Activated B cell treated with CpG ODN at 0.5 μM for 24 hours (primary cell): ENCODE measurements at regions of chr16 and their contacts with region 1.

Region 1: DNA sequence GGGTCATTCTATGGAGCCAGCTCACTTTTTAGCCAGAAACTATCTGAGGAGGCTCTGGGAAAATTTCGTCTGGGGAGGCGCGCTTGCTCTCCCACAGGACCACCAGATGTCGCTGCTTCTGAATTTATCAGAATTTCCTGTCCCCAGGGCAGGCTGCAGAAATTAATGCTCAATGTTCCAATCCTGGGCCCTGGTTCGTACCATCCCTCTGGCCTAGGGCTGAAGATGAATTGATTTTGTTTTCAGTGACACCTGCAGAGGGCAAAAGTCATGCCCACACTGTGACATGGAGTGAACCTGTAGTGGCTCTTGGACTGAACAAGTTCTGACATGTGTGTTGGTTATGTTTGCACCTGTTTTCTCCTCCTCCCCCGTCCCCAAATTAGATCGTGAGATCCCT is 482.6 kb downstream of the NPIPA7 start:
- DNase-seq: peak; percentile 18
- ATAC-seq: no peak
- H3K4me3 Mint-ChIP-seq: no peak overlapping the region
- H3K27ac Mint-ChIP-seq: no peak overlapping the region
- H3K4me1 Mint-ChIP-seq: peaks cover 2% of the 10 kb centered on the region
- H3K27me3 Mint-ChIP-seq: peaks cover 8% of the 10 kb centered on the region
- CTCF ChIP-seq: no peak

Region 2: GRCh38 chr16:16183562-16183961 is 678.0 kb before region 1 on chr16:
- CTCF ChIA-PET with region 1: no interaction called
- POLR2A ChIA-PET with region 1: no interaction called
- intact Hi-C with region 1: no loop called
- DNase-seq: no peak
- ATAC-seq: no peak
- H3K4me3 Mint-ChIP-seq: no peak overlapping the region
- H3K27ac Mint-ChIP-seq: no peak overlapping the region
- H3K4me1 Mint-ChIP-seq: no peaks in the 10 kb centered on the region
- H3K27me3 Mint-ChIP-seq: peaks cover 6% of the 10 kb centered on the region
- CTCF ChIP-seq: no peak

Region 3: GRCh38 chr16:17070882-17071592 is 209.5 kb after region 1 on chr16:
- CTCF ChIA-PET with region 1: no interaction called
- POLR2A ChIA-PET with region 1: no interaction called
- intact Hi-C with region 1: loop called (anchors 2 kb)
- DNase-seq: peak; percentile 67
- ATAC-seq: peak; percentile 82
- H3K4me3 Mint-ChIP-seq: peak overlapping the region; percentile 88
- H3K27ac Mint-ChIP-seq: peak overlapping the region; percentile 98
- H3K4me1 Mint-ChIP-seq: peaks cover 59% of the 10 kb centered on the region
- H3K27me3 Mint-ChIP-seq: no peaks in the 10 kb centered on the region
- CTCF ChIP-seq: no peak

Region 4: GRCh38 chr16:17138801-17139200 is 277.3 kb after region 1 on chr16:
- CTCF ChIA-PET with region 1: no interaction called
- POLR2A ChIA-PET with region 1: no interaction called
- intact Hi-C with region 1: loop called (anchors 1 kb)
- DNase-seq: no peak
- ATAC-seq: no peak
- H3K4me3 Mint-ChIP-seq: no peak overlapping the region
- H3K27ac Mint-ChIP-seq: no peak overlapping the region
- H3K4me1 Mint-ChIP-seq: peaks cover 11% of the 10 kb centered on the region
- H3K27me3 Mint-ChIP-seq: no peaks in the 10 kb centered on the region
- CTCF ChIP-seq: no peak

Region 5: GRCh38 chr16:17173281-17173680 is 311.7 kb after region 1 on chr16:
- CTCF ChIA-PET with region 1: no interaction called
- POLR2A ChIA-PET with region 1: no interaction called
- intact Hi-C with region 1: loop called (anchors 10 kb)
- DNase-seq: no peak
- ATAC-seq: peak; percentile 54
- H3K4me3 Mint-ChIP-seq: peak overlapping the region; percentile 35
- H3K27ac Mint-ChIP-seq: no peak overlapping the region
- H3K4me1 Mint-ChIP-seq: peaks cover 22% of the 10 kb centered on the region
- H3K27me3 Mint-ChIP-seq: no peaks in the 10 kb centered on the region
- CTCF ChIP-seq: no peak

Region 6: DNA sequence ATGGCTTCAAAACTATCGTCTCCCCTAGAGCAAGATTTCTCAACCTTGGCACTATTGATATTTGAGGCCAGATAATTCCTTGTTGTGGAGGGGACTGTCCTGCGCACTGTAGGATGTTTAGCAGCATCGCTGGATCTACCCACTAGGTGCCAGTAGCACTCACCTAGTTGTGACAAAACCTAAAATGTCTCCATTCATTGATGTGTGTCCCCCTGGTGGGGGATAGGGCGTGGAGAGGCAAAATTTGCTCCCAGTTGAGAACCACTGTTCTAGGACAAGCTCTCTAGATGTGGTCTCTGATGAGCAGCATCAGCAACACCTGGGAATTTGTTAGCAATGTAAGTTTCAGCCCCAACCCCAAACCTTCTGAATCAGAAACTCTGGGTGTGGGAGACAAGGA is 350.3 kb after region 1 on chr16:
- CTCF ChIA-PET with region 1: no interaction called
- POLR2A ChIA-PET with region 1: no interaction called
- intact Hi-C with region 1: loop called (anchors 10 kb)
- DNase-seq: no peak
- ATAC-seq: peak; percentile 34
- H3K4me3 Mint-ChIP-seq: no peak overlapping the region
- H3K27ac Mint-ChIP-seq: no peak overlapping the region
- H3K4me1 Mint-ChIP-seq: peaks cover 10% of the 10 kb centered on the region
- H3K27me3 Mint-ChIP-seq: no peaks in the 10 kb centered on the region
- CTCF ChIP-seq: no peak

Region 7: GRCh38 chr16:17578921-17579874 is 717.7 kb after region 1 on chr16:
- CTCF ChIA-PET with region 1: interaction called, 30 read pairs
- POLR2A ChIA-PET with region 1: no interaction called
- intact Hi-C with region 1: loop called (anchors 1 kb)
- DNase-seq: no peak
- ATAC-seq: peak; percentile 70
- H3K4me3 Mint-ChIP-seq: no peak overlapping the region
- H3K27ac Mint-ChIP-seq: no peak overlapping the region
- H3K4me1 Mint-ChIP-seq: no peaks in the 10 kb centered on the region
- H3K27me3 Mint-ChIP-seq: peaks cover 6% of the 10 kb centered on the region
- CTCF ChIP-seq: peak; percentile 83